GM10248 (cell line): ENCODE measurements at regions of chr3 and their contacts with region 1.

Region 1: GRCh38 chr3:197256836-197257444 is 41.5 kb downstream of the DLG1 start:
- DNase-seq: peak; percentile 14
- CTCF ChIP-seq: peak; percentile 54

Region 2: GRCh38 chr3:197117092-197117491 is 139.8 kb before region 1 on chr3:
- CTCF ChIA-PET with region 1: no interaction called
- POLR2A ChIA-PET with region 1: no interaction called
- DNase-seq: no peak
- CTCF ChIP-seq: no peak

Region 3: GRCh38 chr3:197137751-197138150 is 119.2 kb before region 1 on chr3:
- CTCF ChIA-PET with region 1: no interaction called
- POLR2A ChIA-PET with region 1: no interaction called
- DNase-seq: no peak
- CTCF ChIP-seq: no peak

Region 4: DNA sequence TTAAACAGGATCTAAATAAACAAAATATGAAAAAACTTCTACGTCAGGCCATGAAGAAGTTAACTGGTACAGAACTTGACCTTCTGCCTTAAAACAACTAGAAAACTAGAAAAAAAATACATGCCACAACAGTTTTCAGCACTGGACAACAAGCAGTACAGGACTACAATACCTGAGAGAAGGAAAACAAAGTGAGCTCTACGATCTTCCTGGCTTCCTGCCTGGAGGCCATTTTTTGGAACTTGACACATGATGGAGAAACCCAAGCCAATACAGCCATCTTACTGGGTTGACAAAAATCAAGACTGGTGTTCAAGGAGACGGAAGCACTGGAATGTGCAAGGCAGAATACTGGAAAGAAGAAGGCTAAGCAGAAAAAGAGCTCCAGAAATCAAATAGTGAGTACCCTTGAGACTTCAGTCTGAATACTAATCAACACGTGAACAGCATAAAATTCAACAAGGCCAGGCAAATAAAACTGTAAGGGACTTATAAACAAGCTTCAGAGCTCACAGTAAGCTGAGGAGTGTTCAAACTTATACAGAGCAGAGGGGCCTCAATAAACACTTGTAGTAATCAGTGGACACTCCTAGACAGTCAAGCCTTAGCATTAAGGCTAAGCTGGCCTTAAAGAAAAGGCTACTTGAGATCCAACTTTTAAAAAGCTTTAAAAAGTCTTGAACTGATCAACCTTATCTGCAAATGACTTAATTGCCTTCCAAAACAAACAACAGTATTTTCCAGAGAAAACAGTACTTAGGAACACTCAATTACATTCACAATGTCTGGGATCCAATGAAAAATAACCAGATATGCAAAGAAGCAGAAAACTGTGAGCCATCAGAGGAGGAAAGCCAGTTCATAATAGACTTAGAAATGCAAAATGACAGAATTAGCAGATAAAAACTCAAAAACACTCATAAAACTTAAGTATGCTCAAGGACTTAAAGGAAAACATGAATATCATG is 21.7 kb before region 1 on chr3:
- CTCF ChIA-PET with region 1: interaction called, 27 read pairs
- POLR2A ChIA-PET with region 1: no interaction called
- DNase-seq: no peak
- CTCF ChIP-seq: no peak

Region 5: GRCh38 chr3:197268294-197268693 is 11.4 kb after region 1 on chr3:
- CTCF ChIA-PET with region 1: interaction called, 47 read pairs
- POLR2A ChIA-PET with region 1: no interaction called
- DNase-seq: no peak
- CTCF ChIP-seq: no peak

Region 6: DNA sequence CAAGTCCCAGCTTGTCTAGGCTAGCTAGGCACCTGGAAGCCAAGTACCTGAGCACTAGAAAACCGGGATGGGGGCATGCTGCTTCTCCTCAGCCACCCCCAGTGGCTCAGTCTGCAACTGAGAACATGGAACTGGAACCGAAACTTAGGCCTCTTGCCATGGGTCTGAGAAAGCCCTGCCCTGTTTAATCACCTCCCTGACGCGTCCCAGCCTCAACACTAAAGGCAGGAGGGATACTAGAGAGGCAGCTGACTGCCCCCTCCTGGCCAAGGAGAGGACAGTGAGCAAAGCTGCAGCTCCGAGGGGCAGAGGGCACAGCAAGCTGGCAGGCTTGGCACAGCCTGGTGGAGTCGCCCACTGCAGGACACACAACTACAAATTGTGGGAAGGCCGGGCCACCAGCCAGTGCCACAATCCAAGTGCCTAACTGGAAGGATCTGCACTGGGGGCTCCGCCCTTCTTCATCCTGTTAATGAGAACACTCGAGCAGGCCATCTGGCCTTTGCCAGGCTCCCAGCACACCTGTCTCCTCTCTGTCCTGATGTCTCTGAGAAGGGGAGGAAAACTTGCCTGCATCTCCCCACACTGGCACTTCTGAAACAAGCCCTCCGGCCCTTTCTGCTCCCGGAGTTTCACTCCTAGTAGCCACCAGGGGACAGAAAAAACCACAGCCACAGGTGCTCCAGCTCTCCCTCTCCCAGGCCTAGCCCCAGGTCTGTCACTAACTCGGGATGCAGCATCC is 245.1 kb after region 1 on chr3:
- CTCF ChIA-PET with region 1: interaction called, 32 read pairs
- POLR2A ChIA-PET with region 1: no interaction called
- DNase-seq: peak; percentile 71
- CTCF ChIP-seq: peak; percentile 55